ENCODE measurements at regions of chr13 and their contacts with region 1.

Region 1: DNA sequence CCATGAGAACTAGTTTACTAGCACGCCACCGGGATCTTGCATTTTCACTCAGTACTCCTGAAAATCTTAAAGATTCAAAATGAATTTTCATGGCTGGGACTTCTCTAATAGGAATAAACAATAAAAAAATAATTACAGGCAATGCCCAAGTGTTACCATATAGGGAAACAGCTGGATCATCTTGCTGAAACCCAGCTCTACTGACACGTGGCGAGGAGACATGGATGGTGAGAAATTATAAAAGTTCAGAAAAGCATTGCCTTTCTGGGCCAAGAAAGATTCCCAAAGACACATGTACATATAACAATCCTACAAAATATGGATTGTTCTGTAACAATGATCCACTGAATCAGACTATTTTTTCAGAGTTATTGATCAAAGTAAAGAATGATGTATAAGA is 209.3 kb downstream of the RGCC start:
- DNase-seq: no peak
- ATAC-seq: no peak

Region 2: DNA sequence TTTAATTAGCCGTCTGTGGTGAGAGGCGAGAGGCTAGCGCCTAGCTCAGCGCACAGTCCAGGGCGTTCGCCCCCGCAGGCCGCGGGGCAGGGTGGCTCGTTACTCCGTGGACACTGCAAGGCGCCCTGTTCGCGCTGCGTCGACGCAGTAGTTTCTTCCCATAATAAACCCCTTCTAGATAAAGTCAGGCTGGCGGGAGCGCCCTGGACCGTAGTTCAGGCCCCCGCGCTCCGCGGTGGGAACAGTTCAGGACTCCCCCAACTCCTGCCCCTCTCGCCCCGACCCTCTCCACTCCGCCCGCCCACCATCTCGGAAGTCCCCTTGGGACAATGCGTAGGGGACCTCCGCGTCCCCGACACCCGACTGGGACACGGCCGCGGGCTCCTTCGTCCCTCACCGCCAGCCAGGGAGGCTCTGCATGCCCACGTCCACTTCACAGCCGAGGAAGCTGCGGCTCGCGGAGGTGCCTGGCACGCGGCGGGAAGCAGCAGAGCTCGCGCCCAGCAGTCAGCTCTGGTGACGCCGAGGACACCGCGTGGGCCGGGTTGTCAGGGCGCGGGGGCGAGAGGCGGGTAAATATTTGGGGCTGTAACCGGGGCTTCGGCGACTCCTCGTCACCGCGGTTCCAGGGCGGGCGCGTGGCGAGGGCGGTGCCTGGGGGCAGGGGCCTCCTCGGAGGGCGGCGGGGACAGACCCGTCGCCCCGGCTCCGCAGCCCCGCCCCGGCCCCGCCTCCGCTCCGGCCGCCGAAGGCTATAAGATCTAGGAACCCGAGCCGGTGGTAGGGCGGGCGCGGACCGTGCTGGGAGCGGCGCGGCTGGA is 209.7 kb before region 1 on chr13 and contains the start of gene RGCC:
- intact Hi-C with region 1: no loop called
- DNase-seq: peak; percentile 88
- ATAC-seq: peak; percentile 93
- total RNA-seq, gene RGCC: 40.2 TPM

Region 3: DNA sequence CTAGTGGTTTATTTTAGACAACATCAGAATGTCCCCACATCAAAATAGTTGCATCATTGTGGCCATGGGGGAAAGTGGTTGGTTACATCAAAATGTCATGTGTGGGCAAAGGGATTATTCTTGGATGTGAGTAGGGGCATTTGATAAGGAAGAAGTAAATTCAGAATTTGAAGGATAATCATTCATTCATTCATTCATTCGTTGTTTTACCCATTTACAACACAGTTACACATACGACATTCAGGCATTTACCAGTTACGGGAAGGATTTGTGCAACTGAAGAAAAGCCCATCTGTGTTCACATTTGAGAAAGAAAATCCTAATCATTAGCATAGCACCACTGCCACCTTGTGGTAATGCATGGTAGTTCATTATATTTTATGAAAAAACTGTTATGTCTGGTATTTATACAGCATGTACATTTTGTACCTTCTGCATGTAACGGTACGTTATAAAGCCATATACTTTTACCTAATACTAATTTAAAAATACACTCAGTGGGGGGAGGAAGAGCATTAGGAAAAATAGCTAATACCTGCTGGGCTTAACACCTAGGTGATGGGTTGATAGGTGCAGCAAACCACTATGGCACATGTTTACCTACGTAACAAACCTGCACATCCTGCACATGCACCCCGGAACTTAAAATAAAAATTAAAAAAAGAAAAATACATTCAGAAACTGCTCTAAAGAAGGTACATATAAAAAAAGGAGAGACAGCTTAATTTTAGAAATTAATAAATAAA is 443.9 kb after region 1 on chr13:
- intact Hi-C with region 1: loop called (anchors 2 kb)
- DNase-seq: no peak
- ATAC-seq: peak; percentile 50

Measured in left ventricle myocardium superior (tissue), 1 donor.